ENCODE measurements at regions of chr20 and their contacts with region 1.

Region 1: GRCh38 chr20:2402271-2402980 is 21.7 kb downstream of the TGM6 start:
- DNase-seq: peak; percentile 40
- H3K4me3 ChIP-seq: no peak overlapping the region
- H3K27ac ChIP-seq: no peak overlapping the region
- H3K4me1 ChIP-seq: no peaks in the 10 kb centered on the region
- H3K27me3 ChIP-seq: no peaks in the 10 kb centered on the region
- CTCF ChIP-seq: peak; percentile 17 to 38
- POLR2A ChIP-seq: no peak

Region 2: DNA sequence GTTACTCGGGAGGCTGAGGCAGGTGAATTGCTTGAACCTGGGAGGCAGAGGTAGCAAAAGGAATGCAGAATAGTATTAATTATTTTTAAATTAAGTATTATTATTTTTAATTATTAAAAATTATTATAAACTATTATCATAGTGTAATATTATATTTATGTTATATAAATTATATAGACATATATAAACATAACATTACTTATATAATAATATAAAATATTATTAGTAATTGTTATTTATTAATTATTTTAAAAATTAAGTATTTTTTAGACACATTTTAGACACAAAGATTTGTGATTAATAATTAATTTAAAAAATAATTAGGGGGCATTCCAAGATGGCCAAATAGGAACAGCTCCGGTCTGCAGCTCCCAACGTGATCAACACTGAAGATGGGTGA is 138.3 kb before region 1 on chr20:
- CTCF ChIA-PET with region 1: no interaction called
- POLR2A ChIA-PET with region 1: no interaction called
- dilution Hi-C with region 1: no loop called
- intact Hi-C with region 1: no loop called
- DNase-seq: no peak
- H3K4me3 ChIP-seq: no peak overlapping the region
- H3K27ac ChIP-seq: no peak overlapping the region
- H3K4me1 ChIP-seq: no peaks in the 10 kb centered on the region
- H3K27me3 ChIP-seq: no peaks in the 10 kb centered on the region
- CTCF ChIP-seq: no peak
- POLR2A ChIP-seq: no peak

Region 3: DNA sequence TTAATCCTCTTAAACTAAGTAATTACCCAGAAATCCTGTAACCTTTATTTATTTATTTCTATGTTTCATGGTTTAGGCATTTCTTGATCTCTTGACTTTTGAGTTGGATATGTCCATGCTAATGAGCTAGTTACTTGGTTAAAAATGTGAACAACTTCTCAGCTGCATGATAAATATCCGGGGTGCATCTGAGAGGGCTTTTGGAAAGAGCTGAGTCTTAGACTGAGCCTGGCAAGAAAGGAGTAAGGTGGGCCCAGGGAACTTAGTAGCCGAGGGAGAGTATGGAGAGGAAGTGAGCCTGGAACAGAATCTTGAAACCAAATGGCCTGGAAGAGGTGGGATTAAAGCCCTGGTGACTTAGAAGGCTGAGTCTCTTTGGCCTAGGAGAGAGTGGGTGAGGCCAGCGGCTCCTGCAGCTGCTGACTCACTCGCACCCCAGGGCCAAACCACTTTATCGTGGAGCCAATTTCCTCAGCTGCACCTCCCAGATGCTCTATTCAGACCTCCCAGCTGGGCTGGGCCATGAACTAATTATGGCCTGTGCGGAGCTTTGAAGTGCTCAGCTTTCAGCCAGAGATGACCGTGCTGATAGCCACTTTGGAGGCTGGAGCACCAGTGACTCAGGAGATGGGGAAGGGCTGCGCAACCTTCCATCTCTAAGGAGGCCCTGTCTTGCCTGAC is 87.5 kb before region 1 on chr20:
- CTCF ChIA-PET with region 1: no interaction called
- POLR2A ChIA-PET with region 1: no interaction called
- dilution Hi-C with region 1: no loop called
- intact Hi-C with region 1: no loop called
- DNase-seq: no peak
- H3K4me3 ChIP-seq: no peak overlapping the region
- H3K27ac ChIP-seq: no peak overlapping the region
- H3K4me1 ChIP-seq: no peaks in the 10 kb centered on the region
- H3K27me3 ChIP-seq: peaks cover 3 to 10% of the 10 kb centered on the region in 2 experiments
- CTCF ChIP-seq: no peak
- POLR2A ChIP-seq: no peak

Region 4: DNA sequence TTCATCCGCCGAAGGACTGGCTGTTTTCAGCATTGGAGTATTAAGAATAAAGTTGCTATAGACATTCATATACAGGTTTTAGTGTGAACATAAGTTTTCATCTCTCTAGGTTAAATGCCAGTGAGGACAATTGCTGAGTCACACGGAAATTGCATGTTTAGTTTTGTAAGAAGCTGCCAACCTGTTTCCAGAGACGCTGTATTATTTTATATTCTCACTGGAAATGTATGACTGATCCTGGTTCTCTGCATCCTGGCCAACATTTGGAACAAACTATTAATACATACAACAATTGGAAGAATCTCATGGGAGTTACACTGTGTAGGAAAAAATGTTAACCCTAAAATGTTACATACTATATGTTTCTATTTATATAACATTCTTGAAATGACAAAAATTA is 38.4 kb before region 1 on chr20:
- CTCF ChIA-PET with region 1: no interaction called
- POLR2A ChIA-PET with region 1: no interaction called
- dilution Hi-C with region 1: no loop called
- intact Hi-C with region 1: no loop called
- DNase-seq: peak; percentile 53
- H3K4me3 ChIP-seq: no peak overlapping the region
- H3K27ac ChIP-seq: no peak overlapping the region
- H3K4me1 ChIP-seq: no peaks in the 10 kb centered on the region
- H3K27me3 ChIP-seq: peaks cover 4 to 11% of the 10 kb centered on the region in 2 experiments
- CTCF ChIP-seq: no peak
- POLR2A ChIP-seq: no peak

Region 5: GRCh38 chr20:2387180-2387577 is 15.2 kb before region 1 on chr20:
- CTCF ChIA-PET with region 1: interaction called, 13 read pairs
- POLR2A ChIA-PET with region 1: no interaction called
- dilution Hi-C with region 1: no loop called
- intact Hi-C with region 1: no loop called
- DNase-seq: peak; percentile 33
- H3K4me3 ChIP-seq: no peak overlapping the region
- H3K27ac ChIP-seq: no peak overlapping the region
- H3K4me1 ChIP-seq: no peaks in the 10 kb centered on the region
- H3K27me3 ChIP-seq: no peaks in the 10 kb centered on the region
- CTCF ChIP-seq: peak; percentile 45 to 59
- POLR2A ChIP-seq: no peak